ENCODE measurements at regions of chr1 and their contacts with region 1.

Region 1: DNA sequence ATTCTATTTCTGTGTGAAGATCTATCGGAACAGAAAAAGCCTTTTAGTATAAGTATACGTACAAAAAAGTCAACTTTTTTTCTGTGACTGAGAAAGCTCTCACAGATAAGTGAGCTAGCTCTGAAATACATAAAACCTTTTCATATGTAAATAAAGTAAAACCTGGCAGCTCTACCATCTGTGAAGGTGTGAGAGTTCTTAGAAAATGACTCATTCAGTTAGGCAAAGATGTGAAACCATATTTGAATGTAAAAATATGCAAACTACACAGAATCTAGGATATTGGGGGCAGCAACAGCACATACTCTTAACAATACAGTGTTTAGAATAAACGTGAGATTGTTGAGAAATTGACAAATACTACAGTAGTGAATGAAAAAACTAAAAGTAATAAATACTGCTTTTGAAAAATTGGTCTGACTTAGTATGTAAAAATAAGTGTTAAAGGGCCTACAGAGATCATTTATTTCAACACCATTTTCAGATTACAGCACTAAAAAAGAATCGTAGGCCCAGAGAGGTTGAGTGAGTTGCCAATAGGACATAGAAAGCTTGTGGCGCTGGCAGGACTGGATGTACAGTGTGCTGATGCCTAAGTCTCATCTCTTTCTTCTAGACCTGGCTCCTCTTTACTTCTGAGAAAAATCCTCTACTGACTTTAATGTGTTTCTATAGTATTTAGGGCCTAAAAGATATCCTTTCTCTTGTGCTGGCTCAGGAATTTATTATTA is 19.8 kb downstream of the ATP6V1G3 start:
- DNase-seq: peak in 3 of 14 experiments; percentile 44 to 74 (median 50)
- ATAC-seq: peak; percentile 52
- H3K4me3 ChIP-seq: peak overlapping the region; percentile 38
- H3K4me3 Mint-ChIP-seq: peak overlapping the region; percentile 79
- H3K27ac ChIP-seq: peak overlapping the region; percentile 48 to 60
- H3K27ac Mint-ChIP-seq: peak overlapping the region; percentile 93
- H3K4me1 ChIP-seq: peaks cover 20% of the 10 kb centered on the region
- H3K4me1 Mint-ChIP-seq: peaks cover 82% of the 10 kb centered on the region
- H3K27me3 ChIP-seq: no peaks in the 10 kb centered on the region
- H3K27me3 Mint-ChIP-seq: no peaks in the 10 kb centered on the region
- CTCF ChIP-seq: no peak

Region 2: GRCh38 chr1:198497346-198498102 is 23.2 kb before region 1 on chr1:
- CTCF ChIA-PET with region 1: no interaction called
- POLR2A ChIA-PET with region 1: no interaction called
- intact Hi-C with region 1: no loop called
- DNase-seq: peak in 3 of 14 experiments; percentile 9 to 21 (median 19)
- ATAC-seq: no peak
- H3K4me3 ChIP-seq: no peak overlapping the region
- H3K4me3 Mint-ChIP-seq: no peak overlapping the region
- H3K27ac ChIP-seq: no peak overlapping the region
- H3K27ac Mint-ChIP-seq: no peak overlapping the region
- H3K4me1 ChIP-seq: no peaks in the 10 kb centered on the region
- H3K4me1 Mint-ChIP-seq: no peaks in the 10 kb centered on the region
- H3K27me3 ChIP-seq: no peaks in the 10 kb centered on the region
- H3K27me3 Mint-ChIP-seq: no peaks in the 10 kb centered on the region
- CTCF ChIP-seq: no peak

Region 3: GRCh38 chr1:198556971-198557370 is 36.3 kb after region 1 on chr1:
- CTCF ChIA-PET with region 1: interaction called, 3 read pairs
- POLR2A ChIA-PET with region 1: interaction called, 10 read pairs
- intact Hi-C with region 1: loop called in 1 of 2 experiments (anchors 5 kb)
- DNase-seq: peak; percentile 15 to 96 (median 53)
- ATAC-seq: peak; percentile 92
- H3K4me3 ChIP-seq: peak overlapping the region; percentile 9
- H3K4me3 Mint-ChIP-seq: peak overlapping the region; percentile 71
- H3K27ac ChIP-seq: peak overlapping the region in 1 of 2 donors; percentile 1
- H3K27ac Mint-ChIP-seq: peak overlapping the region; percentile 40
- H3K4me1 ChIP-seq: peaks cover 32% of the 10 kb centered on the region
- H3K4me1 Mint-ChIP-seq: peaks cover 91% of the 10 kb centered on the region
- H3K27me3 ChIP-seq: no peaks in the 10 kb centered on the region
- H3K27me3 Mint-ChIP-seq: no peaks in the 10 kb centered on the region
- CTCF ChIP-seq: no peak

Region 4: DNA sequence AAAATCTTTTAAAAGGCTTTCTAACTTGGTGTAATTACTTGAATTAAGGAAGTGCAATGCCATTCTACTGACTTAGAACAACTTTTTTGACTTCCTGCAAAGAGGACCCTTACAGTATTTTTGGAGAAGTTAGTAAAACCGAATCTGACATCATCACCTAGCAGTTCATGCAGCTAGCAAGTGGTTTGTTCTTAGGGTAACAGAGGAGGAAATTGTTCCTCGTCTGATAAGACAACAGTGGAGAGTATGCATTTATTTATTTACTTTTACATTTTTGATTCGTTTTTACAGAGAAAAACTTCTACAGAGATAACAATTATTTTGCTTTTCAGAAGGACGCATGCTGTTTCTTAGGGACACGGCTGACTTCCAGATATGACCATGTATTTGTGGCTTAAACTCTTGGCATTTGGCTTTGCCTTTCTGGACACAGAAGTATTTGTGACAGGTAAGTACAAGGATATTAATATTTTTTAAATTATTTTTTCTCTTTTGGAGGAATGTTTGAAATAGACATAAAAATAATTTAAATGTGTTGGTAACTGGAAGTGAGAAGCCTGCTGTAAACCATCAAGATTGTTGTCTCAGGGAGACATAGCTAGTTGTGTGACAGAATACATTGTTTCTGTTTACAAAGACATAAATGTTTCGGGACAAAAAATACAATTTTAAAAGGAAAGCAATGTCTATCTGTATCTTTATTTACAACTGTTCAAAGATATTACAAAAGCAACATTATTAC is 118.4 kb after region 1 on chr1 and contains the start of gene PTPRC:
- CTCF ChIA-PET with region 1: no interaction called
- POLR2A ChIA-PET with region 1: interaction called, 18 read pairs
- intact Hi-C with region 1: loop called (anchors 5 kb)
- DNase-seq: peak in 4 of 14 experiments; percentile 35 to 88 (median 76)
- ATAC-seq: peak; percentile 83
- H3K4me3 ChIP-seq: peak within 1 kb of the TSS; percentile 79
- H3K4me3 Mint-ChIP-seq: peak within 1 kb of the TSS; percentile 95
- H3K27ac ChIP-seq: peak within 1 kb of the TSS; percentile 67 to 77
- H3K27ac Mint-ChIP-seq: peak within 1 kb of the TSS; percentile 98
- H3K4me1 ChIP-seq: peaks cover 20% of the 10 kb centered on the region
- H3K4me1 Mint-ChIP-seq: peaks cover 62% of the 10 kb centered on the region
- H3K27me3 ChIP-seq: no peaks in the 10 kb centered on the region
- H3K27me3 Mint-ChIP-seq: no peaks in the 10 kb centered on the region
- CTCF ChIP-seq: no peak
- total RNA-seq, gene PTPRC: 661 to 698 TPM

Region 5: DNA sequence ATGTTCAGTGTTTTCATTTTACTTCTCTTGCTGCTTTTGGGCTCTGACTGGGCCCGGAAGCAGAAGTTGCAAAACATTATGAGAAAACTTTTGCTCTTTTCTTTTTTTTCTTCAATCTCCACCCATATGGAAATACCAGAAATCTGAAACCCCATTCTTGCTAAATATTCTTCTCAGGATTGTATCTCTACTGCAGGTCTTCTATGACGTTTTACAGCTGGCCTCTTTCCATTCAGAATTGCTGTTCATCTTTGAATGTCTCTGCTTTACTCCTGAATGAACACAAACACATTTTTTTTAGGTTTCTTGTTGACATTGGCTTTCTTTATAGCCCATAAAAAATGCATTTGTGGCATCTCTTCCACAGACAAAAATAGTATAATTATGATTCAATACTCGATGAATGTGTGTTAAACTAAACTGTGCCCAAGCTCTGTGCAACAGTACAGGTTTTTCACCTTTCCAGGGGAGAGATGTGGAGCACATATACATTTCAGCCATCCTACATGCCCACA is 136.9 kb after region 1 on chr1:
- CTCF ChIA-PET with region 1: no interaction called
- POLR2A ChIA-PET with region 1: interaction called, 26 read pairs
- intact Hi-C with region 1: no loop called
- DNase-seq: peak in 5 of 14 experiments; percentile 21 to 85 (median 78)
- ATAC-seq: peak; percentile 25
- H3K4me3 ChIP-seq: peak overlapping the region; percentile 22
- H3K4me3 Mint-ChIP-seq: peak overlapping the region; percentile 66
- H3K27ac ChIP-seq: peak overlapping the region; percentile 81 to 85
- H3K27ac Mint-ChIP-seq: peak overlapping the region; percentile 90
- H3K4me1 ChIP-seq: peaks cover 25% of the 10 kb centered on the region
- H3K4me1 Mint-ChIP-seq: peaks cover 69% of the 10 kb centered on the region
- H3K27me3 ChIP-seq: no peaks in the 10 kb centered on the region
- H3K27me3 Mint-ChIP-seq: no peaks in the 10 kb centered on the region
- CTCF ChIP-seq: no peak

Region 6: DNA sequence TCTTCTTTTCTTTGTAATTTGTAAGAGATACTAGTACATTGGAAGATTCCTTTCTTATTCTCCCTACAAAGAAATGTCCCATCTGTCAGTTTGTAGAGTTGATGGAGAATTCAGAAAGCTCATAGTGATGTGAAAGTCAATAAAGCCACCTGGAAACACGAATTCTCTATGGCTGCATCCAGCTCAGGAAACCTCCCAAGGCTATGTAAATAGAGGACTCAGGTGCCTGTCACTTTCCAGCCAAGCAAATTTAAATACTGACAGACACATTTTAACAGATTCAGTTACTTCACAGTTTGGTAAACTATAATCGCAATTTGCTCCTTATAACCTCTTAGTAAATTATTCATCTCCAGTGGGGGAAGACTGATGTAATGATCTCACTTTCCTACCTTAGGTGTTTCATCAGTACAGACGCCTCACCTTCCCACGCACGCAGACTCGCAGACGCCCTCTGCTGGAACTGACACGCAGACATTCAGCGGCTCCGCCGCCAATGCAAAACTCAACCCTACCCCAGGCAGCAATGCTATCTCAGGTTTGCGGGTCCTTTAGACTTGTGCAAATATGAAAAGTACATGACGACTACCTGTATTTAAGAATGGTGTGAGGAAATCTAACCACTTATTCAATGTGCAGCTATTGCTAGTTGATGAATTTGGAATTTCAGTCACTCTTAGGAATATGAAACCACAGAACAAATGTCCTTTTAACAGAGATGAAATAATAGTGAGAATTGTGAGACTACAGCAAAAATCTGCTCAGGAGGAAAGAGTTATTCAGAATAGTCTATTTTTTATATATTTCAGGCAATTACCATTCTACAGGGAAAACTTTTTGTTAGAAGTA is 178.7 kb after region 1 on chr1:
- CTCF ChIA-PET with region 1: interaction called, 3 read pairs
- POLR2A ChIA-PET with region 1: interaction called, 9 read pairs
- intact Hi-C with region 1: loop called in 1 of 2 experiments (anchors 5 kb)
- DNase-seq: peak; percentile 54 to 83 (median 68)
- ATAC-seq: peak; percentile 88
- H3K4me3 ChIP-seq: no peak overlapping the region
- H3K4me3 Mint-ChIP-seq: peak overlapping the region; percentile 66
- H3K27ac ChIP-seq: peak overlapping the region in 1 of 2 donors; percentile 46
- H3K27ac Mint-ChIP-seq: peak overlapping the region; percentile 85
- H3K4me1 ChIP-seq: peaks cover 36% of the 10 kb centered on the region
- H3K4me1 Mint-ChIP-seq: peaks cover 88% of the 10 kb centered on the region
- H3K27me3 ChIP-seq: no peaks in the 10 kb centered on the region
- H3K27me3 Mint-ChIP-seq: no peaks in the 10 kb centered on the region
- CTCF ChIP-seq: peak; percentile 70